GM12878 (cell line): ENCODE measurements at regions of chr3 and their contacts with region 1.

Region 1: GRCh38 chr3:8987645-8988383 is 24.5 kb upstream of the RAD18 start:
- DNase-seq: no peak
- ATAC-seq: peak; percentile 98
- H3K4me3 ChIP-seq: no peak overlapping the region
- H3K27ac ChIP-seq: no peak overlapping the region
- H3K4me1 ChIP-seq: no peaks in the 10 kb centered on the region
- H3K27me3 ChIP-seq: no peaks in the 10 kb centered on the region
- CTCF ChIP-seq: peak; percentile 59 to 85 (median 79)
- EP300 ChIP-seq: no peak
- POLR2A ChIP-seq: no peak
- RAD21 ChIP-seq: peak; percentile 81

Region 2: GRCh38 chr3:8702560-8702959 is 285.3 kb before region 1 on chr3:
- CTCF ChIA-PET with region 1: no interaction called
- POLR2A ChIA-PET with region 1: no interaction called
- RAD21 ChIA-PET with region 1: no interaction called
- SMC1A ChIA-PET with region 1: no interaction called
- in situ Hi-C with region 1: no loop called
- intact Hi-C with region 1: no loop called
- DNase-seq: no peak
- ATAC-seq: peak; percentile 59; the same call in 2 of the 3 replicates
- H3K4me3 ChIP-seq: no peak overlapping the region
- H3K27ac ChIP-seq: no peak overlapping the region
- H3K4me1 ChIP-seq: no peaks in the 10 kb centered on the region
- H3K27me3 ChIP-seq: no peaks in the 10 kb centered on the region
- CTCF ChIP-seq: peak; percentile 30 to 53 (median 40)
- EP300 ChIP-seq: no peak
- POLR2A ChIP-seq: no peak
- RAD21 ChIP-seq: no peak

Region 3: DNA sequence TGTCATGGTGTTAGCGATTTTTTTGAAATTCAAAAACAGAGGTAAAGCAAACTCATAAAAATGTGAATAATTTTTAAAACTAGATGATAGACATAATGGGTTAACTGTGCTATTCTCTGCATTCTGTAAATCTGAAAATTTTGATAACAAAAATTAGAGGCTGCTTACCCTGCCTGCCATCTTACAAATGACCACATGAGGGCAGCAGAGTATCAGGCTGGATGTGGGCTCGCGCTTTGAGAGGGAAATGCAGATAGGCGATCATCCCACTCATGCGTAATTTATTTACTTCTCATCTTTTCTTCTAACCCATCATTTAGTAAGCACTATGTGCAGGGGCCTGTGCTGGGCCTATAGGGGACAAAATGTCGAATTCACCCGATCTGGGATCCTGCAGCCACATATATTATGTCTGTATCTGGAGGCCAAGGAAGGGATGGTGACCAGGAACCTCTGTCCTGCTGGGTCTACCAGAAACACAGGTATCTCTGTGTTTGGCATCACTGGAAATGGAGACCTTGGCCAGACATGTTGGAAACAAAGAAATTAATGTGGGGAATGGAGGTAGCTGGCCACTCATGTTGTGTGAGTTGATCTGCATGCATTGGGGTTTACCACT is 16.7 kb before region 1 on chr3:
- CTCF ChIA-PET with region 1: interaction called, 55 read pairs
- POLR2A ChIA-PET with region 1: no interaction called
- RAD21 ChIA-PET with region 1: no interaction called
- SMC1A ChIA-PET with region 1: interaction called, 4 read pairs
- in situ Hi-C with region 1: no loop called
- intact Hi-C with region 1: no loop called
- DNase-seq: no peak
- ATAC-seq: peak; percentile 84
- H3K4me3 ChIP-seq: no peak overlapping the region
- H3K27ac ChIP-seq: no peak overlapping the region
- H3K4me1 ChIP-seq: no peaks in the 10 kb centered on the region
- H3K27me3 ChIP-seq: no peaks in the 10 kb centered on the region
- CTCF ChIP-seq: peak; percentile 91 to 96 (median 92)
- EP300 ChIP-seq: no peak
- POLR2A ChIP-seq: no peak
- RAD21 ChIP-seq: peak; percentile 97

Region 4: GRCh38 chr3:9047452-9048346 is 59.9 kb after region 1 on chr3:
- CTCF ChIA-PET with region 1: interaction called, 10 read pairs
- POLR2A ChIA-PET with region 1: no interaction called
- RAD21 ChIA-PET with region 1: no interaction called
- SMC1A ChIA-PET with region 1: no interaction called
- in situ Hi-C with region 1: no loop called
- intact Hi-C with region 1: no loop called
- DNase-seq: no peak
- ATAC-seq: no peak
- H3K4me3 ChIP-seq: no peak overlapping the region
- H3K27ac ChIP-seq: no peak overlapping the region
- H3K4me1 ChIP-seq: no peaks in the 10 kb centered on the region
- H3K27me3 ChIP-seq: no peaks in the 10 kb centered on the region
- CTCF ChIP-seq: no peak
- EP300 ChIP-seq: no peak
- POLR2A ChIP-seq: no peak
- RAD21 ChIP-seq: no peak

Region 5: DNA sequence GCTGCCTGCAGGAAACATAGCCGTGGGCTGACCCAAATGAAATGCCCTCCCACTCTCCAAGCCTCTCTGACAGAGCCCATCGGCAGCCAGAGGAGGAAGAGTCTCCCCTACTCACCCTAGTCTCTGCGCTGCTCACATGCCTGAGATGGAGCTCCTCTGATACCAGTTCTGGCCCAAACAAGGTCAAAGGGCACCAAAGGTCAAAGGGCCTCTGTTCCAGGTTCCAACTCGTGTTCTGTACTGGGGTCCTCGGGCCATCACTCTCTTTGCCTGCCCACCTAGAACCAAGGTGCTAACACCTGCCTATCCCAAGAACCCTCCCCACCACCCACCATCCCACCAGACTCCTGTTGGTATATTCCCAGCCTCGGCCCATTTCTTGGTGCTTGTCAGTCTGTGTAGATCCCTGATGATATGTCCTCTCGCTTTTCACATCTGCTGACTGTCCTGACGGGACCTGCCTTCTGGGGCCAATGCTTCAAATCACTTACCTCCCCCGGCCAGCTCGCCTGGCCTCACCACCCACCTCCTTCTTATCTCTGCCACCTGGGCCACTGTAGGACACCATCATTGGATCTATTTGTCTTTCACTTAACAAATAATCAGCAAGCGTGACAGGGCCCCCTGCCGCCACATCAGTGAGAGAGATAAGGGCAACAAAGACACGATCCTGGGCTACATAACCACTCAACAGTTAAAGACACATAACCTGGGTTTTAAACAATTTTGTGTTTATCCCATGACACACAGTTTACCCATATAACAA is 171.2 kb after region 1 on chr3:
- CTCF ChIA-PET with region 1: no interaction called
- POLR2A ChIA-PET with region 1: no interaction called
- RAD21 ChIA-PET with region 1: no interaction called
- SMC1A ChIA-PET with region 1: no interaction called
- in situ Hi-C with region 1: no loop called
- intact Hi-C with region 1: no loop called
- DNase-seq: no peak
- ATAC-seq: no peak
- H3K4me3 ChIP-seq: no peak overlapping the region
- H3K27ac ChIP-seq: no peak overlapping the region
- H3K4me1 ChIP-seq: no peaks in the 10 kb centered on the region
- H3K27me3 ChIP-seq: no peaks in the 10 kb centered on the region
- CTCF ChIP-seq: no peak
- EP300 ChIP-seq: no peak
- POLR2A ChIP-seq: no peak
- RAD21 ChIP-seq: no peak

Region 6: DNA sequence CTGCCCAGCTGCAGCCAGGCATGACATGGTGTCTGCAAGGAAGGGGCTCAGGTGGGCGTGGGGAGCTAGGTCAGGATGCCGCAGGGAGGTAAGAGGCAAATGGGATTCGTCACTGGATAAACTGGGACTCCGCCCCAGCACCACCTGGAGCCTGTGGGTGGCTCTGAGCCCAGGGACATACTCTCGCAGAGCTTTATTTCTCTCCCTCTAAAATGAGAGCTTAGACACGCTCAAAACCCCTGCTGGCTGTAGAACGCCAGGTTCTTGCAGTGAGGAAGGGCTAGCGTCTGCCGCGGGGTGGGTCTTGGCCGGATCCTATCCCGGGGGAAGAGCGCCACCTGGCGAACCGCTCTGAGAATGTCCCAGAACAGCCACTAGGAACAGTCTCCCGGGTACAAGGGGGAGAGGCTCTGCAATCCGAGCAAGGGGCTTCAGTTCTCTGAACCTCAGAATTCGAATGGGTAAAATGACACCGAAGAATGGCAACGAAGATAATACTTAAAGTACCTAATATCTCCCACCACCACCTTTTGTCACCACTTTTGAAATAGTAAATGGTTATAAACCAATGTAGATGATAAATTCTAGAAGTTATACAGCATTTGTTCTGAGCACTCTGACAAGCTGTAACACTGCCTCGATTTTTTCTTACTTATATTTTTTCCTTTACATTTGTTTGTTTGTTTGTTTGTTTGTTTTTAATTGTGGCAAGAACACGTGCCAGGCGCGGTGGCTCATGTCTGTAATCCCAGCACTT is 314.8 kb after region 1 on chr3:
- CTCF ChIA-PET with region 1: interaction called, 48 read pairs
- POLR2A ChIA-PET with region 1: no interaction called
- RAD21 ChIA-PET with region 1: interaction called, 7 read pairs
- SMC1A ChIA-PET with region 1: interaction called, 10 read pairs
- in situ Hi-C with region 1: no loop called
- intact Hi-C with region 1: loop called (anchors 1 kb)
- DNase-seq: no peak
- ATAC-seq: peak; percentile 100
- H3K4me3 ChIP-seq: no peak overlapping the region
- H3K27ac ChIP-seq: no peak overlapping the region
- H3K4me1 ChIP-seq: no peaks in the 10 kb centered on the region
- H3K27me3 ChIP-seq: no peaks in the 10 kb centered on the region
- CTCF ChIP-seq: peak; percentile 81 to 92 (median 82); a peak in 5 of 6 replicates
- EP300 ChIP-seq: no peak
- POLR2A ChIP-seq: no peak
- RAD21 ChIP-seq: peak; percentile 81